A549 (cell line): ENCODE measurements at regions of chr15 and their contacts with region 1.

Region 1: DNA sequence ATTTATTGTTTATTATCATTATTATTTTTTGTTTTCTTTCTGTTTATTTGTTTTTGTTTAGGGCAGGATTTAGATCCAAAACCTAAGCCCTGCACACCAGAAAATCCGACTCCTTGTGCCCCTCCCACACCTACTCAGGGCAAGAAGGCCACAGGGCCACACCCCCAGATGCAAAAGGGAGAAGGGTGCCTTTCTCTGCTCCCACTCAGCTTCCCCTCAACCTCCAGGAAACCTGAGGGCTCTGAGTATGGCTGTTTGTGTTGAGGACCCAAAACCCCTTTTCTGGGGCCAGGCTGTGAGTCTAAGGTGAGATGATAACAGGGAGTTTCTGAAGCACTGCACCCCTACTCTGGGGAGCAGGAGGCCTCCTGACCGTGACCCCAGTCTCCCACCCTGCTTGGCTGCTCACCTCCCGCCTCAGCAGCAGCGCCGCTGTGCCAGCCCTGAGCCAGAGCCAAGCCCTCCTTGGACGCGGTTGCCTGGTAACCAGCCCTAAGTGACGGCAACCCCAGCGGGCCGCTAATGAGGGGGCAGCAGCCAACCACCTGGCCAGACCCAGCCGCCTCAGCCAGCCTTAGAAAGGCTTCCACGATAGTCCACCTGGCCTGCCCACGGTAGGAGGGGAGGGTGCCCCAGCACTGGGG is 6.4 kb upstream of the C15orf39 start:
- DNase-seq: no peak
- ATAC-seq: no peak
- H3K4me3 ChIP-seq: no peak overlapping the region
- H3K27ac ChIP-seq: no peak overlapping the region
- H3K4me1 ChIP-seq: no peaks in the 10 kb centered on the region
- CTCF ChIP-seq: no peak
- EP300 ChIP-seq: no peak
- POLR2A ChIP-seq: no peak
- RAD21 ChIP-seq: no peak

Region 2: DNA sequence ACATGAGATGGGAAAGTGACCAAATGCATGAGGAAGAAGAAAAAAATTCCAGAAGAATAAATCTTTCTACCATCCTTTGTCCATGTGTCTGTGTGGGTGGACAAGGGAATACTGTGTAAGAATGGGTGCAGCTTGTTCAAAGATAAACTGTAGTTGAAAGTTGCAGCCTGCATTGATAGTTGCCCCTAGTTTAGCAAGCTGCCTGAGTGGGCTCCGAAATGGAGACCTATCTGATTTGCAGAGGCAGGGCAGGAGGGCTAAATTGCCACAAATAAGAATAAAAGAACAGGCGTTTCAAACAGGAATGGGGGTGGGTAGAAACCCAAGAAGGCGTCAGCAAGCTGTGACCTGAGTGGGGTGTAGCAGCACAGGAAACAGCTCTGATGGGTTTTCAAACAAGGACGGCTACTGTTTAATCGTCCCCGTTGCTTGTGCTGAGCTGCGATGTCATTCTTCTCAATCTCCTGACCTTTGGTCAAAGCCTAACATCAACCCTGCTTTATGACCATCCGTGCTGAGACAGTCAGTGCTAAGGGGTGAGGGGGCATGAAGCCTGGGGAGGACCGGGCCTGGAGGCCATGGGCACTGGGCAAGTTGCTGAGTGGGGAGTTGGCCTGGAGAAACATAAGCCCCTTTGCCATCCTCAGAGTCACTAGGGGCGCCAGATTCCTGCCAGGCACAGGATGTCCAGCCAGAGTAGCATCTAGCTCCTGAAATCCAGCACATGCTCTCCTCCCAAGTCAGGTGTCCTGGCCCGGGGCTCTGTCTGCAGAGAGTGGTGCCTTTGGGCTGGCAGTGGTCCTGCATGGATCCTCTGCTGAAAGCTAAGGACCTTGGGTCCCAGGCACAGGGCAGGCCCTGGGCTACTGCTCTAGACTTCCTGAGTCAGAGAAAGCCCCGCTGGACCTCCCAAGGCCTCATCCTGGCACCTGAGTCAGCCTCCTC is 12.8 kb before region 1 on chr15:
- CTCF ChIA-PET with region 1: interaction called, 14 read pairs
- POLR2A ChIA-PET with region 1: no interaction called
- DNase-seq: no peak
- ATAC-seq: peak; percentile 49 to 73; a peak in 5 of 6 replicates
- H3K4me3 ChIP-seq: no peak overlapping the region
- H3K27ac ChIP-seq: peak overlapping the region; percentile 4 to 38; a peak in 3 of 6 replicates
- H3K4me1 ChIP-seq: peaks cover 28% of the 10 kb centered on the region
- CTCF ChIP-seq: no peak
- EP300 ChIP-seq: no peak
- POLR2A ChIP-seq: no peak
- RAD21 ChIP-seq: no peak; a peak in 1 of 5 replicates